Gastrocnemius medialis (tissue), 4 donors: ENCODE measurements at regions of chr11 and their contacts with region 1.

Region 1: GRCh38 chr11:124763156-124763947 is 1.3 kb upstream of the ESAM start:
- DNase-seq: peak in 1 of 2 donors; percentile 58
- ATAC-seq: peak; percentile 39 to 52
- H3K4me3 ChIP-seq: peak overlapping the region; percentile 52 to 67 (median 60)
- H3K27ac ChIP-seq: peak overlapping the region in 3 of 4 donors; percentile 76 to 87 (median 87)
- H3K4me1 ChIP-seq: peaks cover 9 to 24% of the 10 kb centered on the region in 2 donors
- H3K27me3 ChIP-seq: peaks cover 32 to 40% (median 35%) of the 10 kb centered on the region in 3 donors
- CTCF ChIP-seq: peak; percentile 67 to 82 (median 71)
- POLR2A ChIP-seq: no peak

Region 2: GRCh38 chr11:124746621-124747243 is 16.6 kb before region 1 on chr11:
- in situ Hi-C with region 1: no loop called
- intact Hi-C with region 1: loop called (anchors 2 kb)
- DNase-seq: peak in 1 of 2 donors; percentile 58
- ATAC-seq: peak; percentile 78 to 83
- H3K4me3 ChIP-seq: peak overlapping the region; percentile 53 to 73 (median 65)
- H3K27ac ChIP-seq: peak overlapping the region; percentile 25 to 70 (median 64)
- H3K4me1 ChIP-seq: peaks cover 0 to 12% of the 10 kb centered on the region in 2 donors
- H3K27me3 ChIP-seq: peaks cover 34 to 72% (median 61%) of the 10 kb centered on the region in 3 donors
- CTCF ChIP-seq: peak in 3 of 5 experiments; percentile 25 to 56 (median 30)
- POLR2A ChIP-seq: peak; percentile 26 to 61

Region 3: GRCh38 chr11:124837491-124837856 is 74.1 kb after region 1 on chr11:
- in situ Hi-C with region 1: loop called in 1 of 4 experiments (anchors 10 kb)
- intact Hi-C with region 1: loop called (anchors 5 kb)
- DNase-seq: no peak
- ATAC-seq: peak in 1 of 2 donors; percentile 52
- H3K4me3 ChIP-seq: no peak overlapping the region
- H3K27ac ChIP-seq: no peak overlapping the region
- H3K4me1 ChIP-seq: peaks cover 9 to 16% of the 10 kb centered on the region in 2 donors
- H3K27me3 ChIP-seq: peaks cover 44 to 49% (median 44%) of the 10 kb centered on the region in 3 donors
- CTCF ChIP-seq: no peak
- POLR2A ChIP-seq: no peak